Tibial artery (tissue), 4 donors: ENCODE measurements at regions of chr10 and their contacts with region 1.

Region 1: DNA sequence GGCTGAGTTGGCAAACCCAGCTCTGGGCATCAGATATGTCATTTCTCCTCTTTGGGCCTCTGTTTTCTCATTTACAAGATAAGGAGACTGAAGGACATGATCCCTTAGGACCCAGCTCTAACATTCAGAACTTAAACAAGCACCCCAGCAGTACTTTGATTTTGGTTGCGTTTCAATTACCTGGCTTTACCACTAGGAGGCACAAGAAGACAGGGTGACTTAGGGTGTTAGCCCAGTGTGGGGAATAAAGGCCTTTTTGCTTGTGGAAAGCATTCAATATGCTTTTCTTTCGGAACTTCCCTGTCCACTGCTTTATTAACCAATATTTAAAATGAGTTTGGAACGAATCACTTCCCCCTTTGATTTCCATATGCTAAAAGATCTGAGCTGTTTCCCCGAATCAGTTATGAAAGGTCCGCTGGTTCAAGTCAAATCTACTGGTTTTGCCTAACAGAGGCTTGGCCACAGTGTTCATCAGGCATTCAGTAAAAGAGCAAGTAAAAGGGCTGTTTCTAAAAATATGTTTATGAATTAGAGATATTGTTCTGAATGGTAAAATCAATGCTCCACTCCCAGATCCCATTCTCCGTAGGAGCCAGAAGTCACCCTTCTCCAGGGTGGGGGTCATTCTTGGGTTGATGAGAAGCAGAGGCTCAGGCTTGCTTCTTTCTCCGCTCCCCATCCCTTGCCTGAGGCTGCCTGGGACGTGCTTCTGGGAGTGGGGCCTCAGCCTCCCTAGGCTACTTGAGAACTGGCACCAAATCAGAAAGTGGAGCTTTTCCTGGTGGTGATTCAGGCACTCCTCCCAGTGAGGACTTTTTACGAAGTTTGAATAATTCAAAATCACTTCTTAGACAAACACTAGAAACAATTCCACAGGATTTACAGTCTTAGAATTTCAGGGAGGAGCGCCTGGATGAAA is 105.5 kb downstream of the MYOF start:
- DNase-seq: peak; percentile 55 to 82
- H3K4me3 ChIP-seq: peak overlapping the region in 1 of 2 donors; percentile 25
- H3K27ac ChIP-seq: peak overlapping the region; percentile 79 to 87
- H3K4me1 ChIP-seq: peaks cover 0 to 45% (median 33%) of the 10 kb centered on the region in 4 donors
- H3K27me3 ChIP-seq: no peaks in the 10 kb centered on the region
- CTCF ChIP-seq: peak; percentile 93 to 98

Region 2: GRCh38 chr10:93392121-93392520 is 15.5 kb after region 1 on chr10:
- intact Hi-C with region 1: no loop called
- DNase-seq: no peak
- H3K4me3 ChIP-seq: no peak overlapping the region
- H3K27ac ChIP-seq: no peak overlapping the region
- H3K4me1 ChIP-seq: peaks cover 0 to 20% (median 6%) of the 10 kb centered on the region in 4 donors
- H3K27me3 ChIP-seq: no peaks in the 10 kb centered on the region
- CTCF ChIP-seq: no peak

Region 3: DNA sequence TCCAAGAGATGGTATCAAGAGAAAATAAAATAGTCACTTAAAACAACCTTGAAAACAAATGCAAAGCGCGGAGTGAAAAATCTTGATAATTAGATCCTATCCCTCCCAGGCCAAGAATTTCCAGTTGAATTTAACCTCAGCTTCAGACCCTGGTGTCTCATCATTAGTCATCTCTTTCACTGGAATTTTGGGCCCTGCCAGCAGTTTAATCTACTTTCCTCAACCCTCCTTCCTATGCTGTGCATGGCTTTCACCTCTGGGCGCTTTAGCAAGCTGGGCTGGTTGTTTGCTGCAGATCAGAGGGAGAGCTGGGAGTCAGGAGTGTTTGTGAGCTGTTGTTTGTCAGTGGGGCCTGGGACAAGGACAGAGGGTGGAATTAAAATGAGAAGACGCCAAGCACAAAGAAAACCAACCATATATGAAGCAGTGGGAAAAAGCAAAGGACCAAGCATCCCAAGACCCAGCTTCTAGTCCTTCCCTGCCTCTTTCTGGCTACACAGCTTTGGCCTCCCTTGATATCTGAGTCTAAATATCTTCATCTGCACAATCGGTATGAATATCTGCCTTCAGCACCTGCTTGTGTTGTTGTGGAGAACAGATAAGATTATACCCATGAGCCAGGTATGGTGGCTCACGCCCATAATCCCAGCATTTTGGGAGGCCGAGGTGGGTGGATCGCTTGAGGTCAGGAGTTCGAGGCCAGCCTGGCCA is 92.0 kb after region 1 on chr10:
- intact Hi-C with region 1: loop called (anchors 5 kb)
- DNase-seq: no peak
- H3K4me3 ChIP-seq: no peak overlapping the region
- H3K27ac ChIP-seq: peak overlapping the region; percentile 71 to 75
- H3K4me1 ChIP-seq: peaks cover 5 to 92% (median 84%) of the 10 kb centered on the region in 4 donors
- H3K27me3 ChIP-seq: no peaks in the 10 kb centered on the region
- CTCF ChIP-seq: no peak

Region 4: DNA sequence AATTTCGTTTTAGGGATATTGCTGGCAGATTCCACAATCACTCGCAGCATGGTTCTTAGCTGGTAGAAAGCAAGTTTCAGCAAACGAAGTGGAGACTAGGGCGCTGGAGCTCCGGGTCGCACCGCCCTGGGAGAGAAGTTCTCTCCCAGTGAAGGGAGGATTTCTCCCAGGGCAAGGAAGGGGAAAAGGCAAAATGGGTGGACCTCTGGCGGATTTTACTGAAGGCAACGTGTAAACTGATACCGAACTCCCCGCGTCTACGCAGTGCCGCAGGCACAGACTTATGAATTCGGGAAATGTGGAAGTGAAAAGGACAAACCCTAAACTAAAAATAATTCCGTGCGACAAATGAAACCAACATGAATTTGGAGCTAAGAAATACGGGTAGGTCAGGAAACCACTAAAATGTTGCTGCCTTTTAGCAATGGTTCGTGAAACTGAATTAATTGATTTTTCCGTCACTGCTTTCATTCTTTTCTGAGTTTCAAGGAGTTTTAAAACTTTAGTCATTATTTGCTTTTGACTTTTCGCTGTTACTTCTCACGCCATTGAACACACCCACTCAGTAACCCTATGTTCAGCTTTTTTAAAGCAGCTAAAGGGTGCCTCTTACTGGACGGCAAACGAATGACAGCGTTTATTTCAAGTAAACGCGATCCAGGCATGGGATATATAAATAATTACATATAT is 105.7 kb after region 1 on chr10 and contains the start of gene MYOF:
- intact Hi-C with region 1: loop called (anchors 2 kb)
- DNase-seq: peak; percentile 73 to 84
- H3K4me3 ChIP-seq: peak within 1 kb of the TSS; percentile 59 to 64
- H3K27ac ChIP-seq: peak within 1 kb of the TSS; percentile 89 to 92
- H3K4me1 ChIP-seq: peaks cover 0 to 44% (median 17%) of the 10 kb centered on the region in 4 donors
- H3K27me3 ChIP-seq: no peaks in the 10 kb centered on the region
- CTCF ChIP-seq: peak; percentile 58 to 73

Region 5: GRCh38 chr10:94123258-94123995 is 746.8 kb after region 1 on chr10:
- intact Hi-C with region 1: no loop called
- DNase-seq: no peak
- H3K4me3 ChIP-seq: no peak overlapping the region
- H3K27ac ChIP-seq: peak overlapping the region; percentile 34 to 51
- H3K4me1 ChIP-seq: peaks cover 0 to 79% (median 22%) of the 10 kb centered on the region in 4 donors
- H3K27me3 ChIP-seq: no peaks in the 10 kb centered on the region
- CTCF ChIP-seq: no peak